K562 (cell line): ENCODE measurements at regions of chr14 and their contacts with region 1.

Region 1: GRCh38 chr14:35416108-35416750 is 11.7 kb upstream of the NFKBIA start:
- DNase-seq: no peak
- ATAC-seq: no peak
- H3K4me3 ChIP-seq: no peak overlapping the region
- H3K27ac ChIP-seq: no peak overlapping the region
- H3K4me1 ChIP-seq: peaks cover 0 to 4% of the 10 kb centered on the region in 2 experiments; a peak in 3 of 5 replicates
- H3K27me3 ChIP-seq: no peaks in the 10 kb centered on the region
- CTCF ChIP-seq: no peak
- EP300 ChIP-seq: no peak
- POLR2A ChIP-seq: no peak
- RAD21 ChIP-seq: no peak

Region 2: DNA sequence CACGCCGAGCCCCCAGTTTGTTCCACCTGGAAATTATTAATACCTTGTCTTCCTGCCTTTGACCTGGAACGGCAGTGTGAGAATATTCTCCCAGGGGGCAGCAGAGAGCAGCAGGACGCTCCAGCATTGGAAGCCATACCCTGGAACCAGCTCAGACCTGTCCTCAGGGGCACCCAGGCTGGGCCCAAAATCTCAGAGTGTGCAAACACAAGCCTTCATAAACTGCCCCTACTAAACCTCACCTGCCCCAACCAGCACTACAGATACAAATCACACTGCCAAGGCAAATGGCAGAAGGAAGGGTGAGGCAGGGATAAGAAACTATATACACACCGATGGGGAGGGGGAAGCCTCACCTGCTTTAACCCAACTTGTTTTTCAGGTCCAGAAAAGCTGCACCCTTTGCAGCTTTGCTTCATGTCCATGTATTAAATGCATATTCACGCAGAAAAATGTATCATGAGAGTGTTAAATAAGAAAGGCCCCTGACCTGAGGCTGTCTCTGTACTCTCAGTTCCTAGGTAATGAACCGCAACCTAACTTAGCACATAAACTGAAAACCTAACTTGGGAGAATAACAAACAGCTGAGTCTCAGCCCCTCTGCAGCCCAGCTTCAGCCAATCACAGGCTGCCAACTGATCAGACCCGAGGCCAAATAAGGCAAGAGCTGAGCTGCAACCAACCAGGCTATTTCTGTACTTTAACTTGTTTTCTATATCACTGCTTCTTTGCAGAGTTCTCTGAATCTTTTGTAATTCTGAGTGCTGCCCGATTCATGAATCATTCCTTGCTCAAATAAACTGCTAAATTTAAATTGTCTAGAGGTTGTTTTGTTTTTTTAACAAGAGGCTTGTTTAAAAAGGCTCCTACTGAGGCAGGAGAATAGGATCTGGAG is 1084.3 kb before region 1 on chr14:
- CTCF ChIA-PET with region 1: no interaction called
- POLR2A ChIA-PET with region 1: no interaction called
- in situ Hi-C with region 1: loop called (anchors 25 kb)
- intact Hi-C with region 1: loop called (anchors 10 kb)
- DNase-seq: peak; percentile 41 to 73 (median 44)
- ATAC-seq: peak; percentile 97
- H3K4me3 ChIP-seq: no peak overlapping the region
- H3K27ac ChIP-seq: 0 out of 3 replicates have a peak overlapping the region, but pooled peaks have one; percentile 32
- H3K4me1 ChIP-seq: no peaks in the 10 kb centered on the region; a peak in 1 of 5 replicates
- H3K27me3 ChIP-seq: no peaks in the 10 kb centered on the region
- CTCF ChIP-seq: peak; percentile 77
- EP300 ChIP-seq: no peak
- POLR2A ChIP-seq: no peak
- RAD21 ChIP-seq: peak; percentile 47 to 78

Region 3: GRCh38 chr14:34982417-34983147 is 433.6 kb before region 1 on chr14 and contains the start of gene SRP54:
- CTCF ChIA-PET with region 1: no interaction called
- POLR2A ChIA-PET with region 1: no interaction called
- in situ Hi-C with region 1: no loop called
- intact Hi-C with region 1: loop called (anchors 10 kb)
- DNase-seq: peak; percentile 94 to 97 (median 96)
- ATAC-seq: peak; percentile 88
- H3K4me3 ChIP-seq: peak within 1 kb of the TSS; percentile 59
- H3K27ac ChIP-seq: peak within 1 kb of the TSS; percentile 97
- H3K4me1 ChIP-seq: peaks cover 4 to 6% of the 10 kb centered on the region in 2 experiments; a peak in 4 of 5 replicates
- H3K27me3 ChIP-seq: no peaks in the 10 kb centered on the region
- CTCF ChIP-seq: peak in 1 of 3 experiments; percentile 35; a peak in 2 of 6 replicates
- EP300 ChIP-seq: peak; percentile 25; the same call in 1 of the 2 replicates
- POLR2A ChIP-seq: peak; percentile 86
- RAD21 ChIP-seq: no peak
- polyA plus RNA-seq, gene SRP54: 44.1 to 64.5 TPM

Region 4: DNA sequence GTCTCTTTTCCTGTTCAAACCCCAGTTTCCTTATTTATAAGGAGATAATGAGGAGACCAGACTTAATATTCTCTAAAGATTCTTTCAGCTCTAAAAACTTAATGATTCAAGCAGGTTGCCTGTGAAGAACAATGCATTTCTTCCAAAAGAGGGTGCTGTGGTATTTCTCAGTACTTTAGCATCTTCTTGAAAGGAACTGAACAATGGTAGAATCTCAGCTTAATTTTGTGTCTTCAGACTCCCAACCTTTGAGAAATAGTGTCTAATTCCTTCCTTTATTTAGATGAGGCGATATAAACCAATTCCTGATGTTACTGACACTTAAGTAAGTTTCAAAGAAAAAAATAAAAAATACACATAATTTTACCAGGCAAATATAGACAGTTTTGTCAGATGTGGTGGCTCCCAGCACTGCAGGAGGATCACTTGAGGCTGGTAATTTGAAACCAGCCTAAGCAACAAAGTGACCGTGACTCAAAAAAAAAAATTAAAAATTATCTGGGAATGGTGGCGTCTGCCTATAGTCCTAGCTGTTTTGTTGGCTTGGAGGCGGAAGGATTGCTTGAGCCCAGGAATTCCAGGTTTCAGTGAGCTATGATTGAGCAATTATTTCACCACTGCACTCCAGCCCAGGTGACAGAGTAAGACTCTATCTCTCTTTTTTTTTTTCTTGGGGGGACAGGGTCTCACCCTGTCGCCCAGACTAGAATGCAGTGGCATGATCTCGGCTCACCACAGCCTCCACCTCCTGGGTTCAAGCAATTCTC is 200.9 kb before region 1 on chr14:
- CTCF ChIA-PET with region 1: interaction called, 12 read pairs
- POLR2A ChIA-PET with region 1: no interaction called
- in situ Hi-C with region 1: no loop called
- intact Hi-C with region 1: no loop called
- DNase-seq: peak in 2 of 4 experiments; percentile 6 to 24
- ATAC-seq: peak; percentile 61; the same call in 2 of the 3 replicates
- H3K4me3 ChIP-seq: no peak overlapping the region
- H3K27ac ChIP-seq: no peak overlapping the region
- H3K4me1 ChIP-seq: no peaks in the 10 kb centered on the region; a peak in 1 of 5 replicates
- H3K27me3 ChIP-seq: no peaks in the 10 kb centered on the region
- CTCF ChIP-seq: peak in 1 of 3 experiments; percentile 42; a peak in 3 of 6 replicates
- EP300 ChIP-seq: no peak
- POLR2A ChIP-seq: no peak
- RAD21 ChIP-seq: peak; percentile 52 to 65

Region 5: GRCh38 chr14:35398071-35398632 is 18.1 kb before region 1 on chr14:
- CTCF ChIA-PET with region 1: no interaction called
- POLR2A ChIA-PET with region 1: no interaction called
- in situ Hi-C with region 1: no loop called
- intact Hi-C with region 1: no loop called
- DNase-seq: no peak
- ATAC-seq: no peak
- H3K4me3 ChIP-seq: no peak overlapping the region
- H3K27ac ChIP-seq: no peak overlapping the region
- H3K4me1 ChIP-seq: peaks cover 13 to 21% of the 10 kb centered on the region in 2 experiments; a peak in 4 of 5 replicates
- H3K27me3 ChIP-seq: no peaks in the 10 kb centered on the region
- CTCF ChIP-seq: no peak
- EP300 ChIP-seq: no peak
- POLR2A ChIP-seq: no peak
- RAD21 ChIP-seq: no peak

Region 6: DNA sequence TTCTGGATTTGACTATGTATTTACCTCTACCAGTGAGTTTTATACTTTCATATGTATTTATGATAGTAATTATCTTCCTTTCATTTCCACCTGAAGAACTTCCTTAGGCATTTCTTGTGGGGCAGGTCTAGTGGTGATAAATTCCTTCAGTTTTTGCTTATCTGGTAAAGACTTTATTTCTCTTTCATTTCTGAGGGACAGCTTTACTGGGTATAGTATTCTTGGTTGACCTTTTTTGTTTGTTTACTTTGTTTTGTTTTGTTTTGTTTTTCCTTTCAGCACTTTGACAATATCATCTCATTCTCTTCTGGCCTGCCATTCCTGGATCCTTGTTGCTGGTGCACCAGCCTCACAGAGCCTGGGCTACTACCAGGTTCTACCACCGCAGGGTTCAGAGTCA is 42.2 kb after region 1 on chr14:
- CTCF ChIA-PET with region 1: no interaction called
- POLR2A ChIA-PET with region 1: no interaction called
- in situ Hi-C with region 1: no loop called
- intact Hi-C with region 1: no loop called
- DNase-seq: no peak
- ATAC-seq: no peak
- H3K4me3 ChIP-seq: no peak overlapping the region
- H3K27ac ChIP-seq: no peak overlapping the region
- H3K4me1 ChIP-seq: no peaks in the 10 kb centered on the region
- H3K27me3 ChIP-seq: no peaks in the 10 kb centered on the region
- CTCF ChIP-seq: no peak
- EP300 ChIP-seq: no peak
- POLR2A ChIP-seq: no peak
- RAD21 ChIP-seq: no peak

Region 7: DNA sequence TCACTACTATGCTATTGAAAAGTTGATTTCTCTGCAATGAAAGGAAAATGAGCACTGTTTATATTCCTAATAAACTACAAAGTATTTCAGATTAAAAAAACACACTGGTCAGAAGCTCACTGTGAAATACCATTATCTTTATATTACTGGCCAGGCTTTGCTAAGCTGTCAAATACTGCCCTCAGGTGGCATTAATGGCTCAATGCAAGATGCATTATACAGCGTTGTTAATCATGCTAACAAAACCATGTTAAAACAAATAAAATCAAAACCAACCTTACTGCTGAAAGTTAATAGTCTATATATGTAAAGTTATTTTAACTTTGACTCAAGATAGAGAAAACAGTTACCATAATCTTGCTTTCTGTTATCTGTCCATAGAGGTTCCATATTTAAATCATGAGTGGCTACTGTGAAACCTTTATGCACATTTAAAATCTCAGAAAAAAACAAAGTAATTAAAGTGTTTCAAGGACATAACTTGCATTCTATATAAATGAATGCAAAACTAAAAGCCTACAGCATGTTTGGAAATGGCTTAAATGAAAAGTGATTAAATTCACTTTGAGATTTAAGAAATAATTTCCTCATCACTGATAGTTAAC is 271.2 kb after region 1 on chr14:
- CTCF ChIA-PET with region 1: no interaction called
- POLR2A ChIA-PET with region 1: interaction called, 3 read pairs
- in situ Hi-C with region 1: no loop called
- intact Hi-C with region 1: loop called (anchors 2 kb)
- DNase-seq: peak; percentile 11 to 55 (median 21)
- ATAC-seq: peak; percentile 84
- H3K4me3 ChIP-seq: no peak overlapping the region
- H3K27ac ChIP-seq: no peak overlapping the region
- H3K4me1 ChIP-seq: no peaks in the 10 kb centered on the region
- H3K27me3 ChIP-seq: no peaks in the 10 kb centered on the region
- CTCF ChIP-seq: peak; percentile 59 to 87 (median 72)
- EP300 ChIP-seq: no peak
- POLR2A ChIP-seq: no peak
- RAD21 ChIP-seq: peak; percentile 83 to 84